ENCODE measurements at regions of chr7 and their contacts with region 1.

Region 1: GRCh38 chr7:105759670-105760550 is 116.5 kb downstream of the ATXN7L1 start:
- DNase-seq: no peak
- ATAC-seq: no peak
- H3K4me3 Mint-ChIP-seq: no peak overlapping the region
- H3K27ac Mint-ChIP-seq: no peak overlapping the region
- H3K4me1 Mint-ChIP-seq: peaks cover 1% of the 10 kb centered on the region
- H3K27me3 Mint-ChIP-seq: no peaks in the 10 kb centered on the region
- CTCF ChIP-seq: peak; percentile 67

Region 2: DNA sequence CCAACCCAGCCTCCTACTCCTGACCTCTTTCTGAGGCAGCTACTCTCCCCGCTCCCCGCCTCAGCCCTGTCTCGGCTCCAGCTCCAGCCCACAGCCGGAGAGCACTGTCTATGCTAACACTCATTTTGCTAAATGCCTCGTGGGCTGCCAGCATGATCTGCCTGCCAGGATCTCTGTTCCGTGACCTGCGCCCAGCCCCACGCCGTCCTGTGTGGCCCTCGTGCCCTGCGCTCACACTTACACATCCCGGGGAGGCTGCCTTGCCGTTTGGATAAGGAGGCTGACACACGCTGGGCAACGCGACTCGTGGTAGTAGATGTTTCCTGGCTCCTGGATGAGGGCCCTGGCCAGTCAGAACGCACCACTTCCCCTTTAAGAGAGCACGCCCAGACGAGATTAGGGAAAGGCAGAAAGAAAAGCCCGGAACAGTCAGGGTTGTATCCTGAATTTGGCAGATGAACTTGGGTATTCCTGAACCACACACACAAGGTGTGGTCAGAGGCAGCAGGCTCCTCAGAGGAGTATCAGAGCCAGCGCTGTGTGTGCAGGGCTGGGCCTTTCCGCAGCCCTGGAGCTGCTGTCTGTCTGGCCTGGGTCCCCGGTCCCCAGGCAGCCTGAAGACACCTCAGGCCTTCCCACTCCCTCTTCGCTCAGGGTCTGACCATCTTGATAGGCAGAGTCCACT is 81.0 kb before region 1 on chr7:
- CTCF ChIA-PET with region 1: interaction called, 3 read pairs
- POLR2A ChIA-PET with region 1: no interaction called
- intact Hi-C with region 1: loop called (anchors 5 kb)
- DNase-seq: peak; percentile 42
- ATAC-seq: peak; percentile 62
- H3K4me3 Mint-ChIP-seq: peak overlapping the region; percentile 94
- H3K27ac Mint-ChIP-seq: peak overlapping the region; percentile 89
- H3K4me1 Mint-ChIP-seq: peaks cover 57% of the 10 kb centered on the region
- H3K27me3 Mint-ChIP-seq: no peaks in the 10 kb centered on the region
- CTCF ChIP-seq: no peak

Region 3: DNA sequence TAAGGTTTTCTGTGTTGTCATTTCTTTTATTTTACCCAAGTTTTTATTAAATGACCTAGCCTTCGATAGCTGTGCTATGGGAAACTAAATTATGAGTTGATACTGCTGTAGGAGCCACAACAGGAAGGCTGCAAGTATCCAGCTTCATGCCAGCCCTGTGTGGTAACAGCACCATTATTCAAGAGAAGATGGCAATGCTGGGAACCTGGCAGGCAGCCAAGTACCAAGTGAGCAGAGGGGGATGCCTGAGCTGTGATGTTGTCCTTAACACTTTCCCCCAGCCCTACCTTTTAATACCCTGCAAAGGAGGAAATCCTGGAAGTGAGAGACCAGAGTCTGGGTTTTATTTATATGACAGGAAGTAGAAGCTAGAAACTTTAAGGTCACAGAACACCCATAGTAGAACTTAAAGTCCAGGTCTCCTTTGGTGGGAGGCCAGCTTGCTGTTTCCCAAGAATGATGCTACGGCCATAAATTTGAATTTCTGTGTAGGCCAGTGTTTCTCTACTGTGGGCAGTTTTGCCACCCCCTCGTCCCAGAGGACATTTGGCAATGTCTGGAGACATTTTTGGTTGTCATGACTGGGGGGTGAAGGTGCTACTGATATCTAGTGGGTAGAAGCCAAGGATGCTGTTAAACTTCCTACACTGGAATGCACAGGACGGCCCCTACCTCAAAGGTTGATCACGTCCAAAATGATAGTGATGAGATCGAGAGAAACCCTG is 125.6 kb after region 1 on chr7:
- CTCF ChIA-PET with region 1: interaction called, 11 read pairs
- POLR2A ChIA-PET with region 1: no interaction called
- intact Hi-C with region 1: no loop called
- DNase-seq: no peak
- ATAC-seq: no peak
- H3K4me3 Mint-ChIP-seq: no peak overlapping the region
- H3K27ac Mint-ChIP-seq: no peak overlapping the region
- H3K4me1 Mint-ChIP-seq: no peaks in the 10 kb centered on the region
- H3K27me3 Mint-ChIP-seq: no peaks in the 10 kb centered on the region
- CTCF ChIP-seq: no peak

Region 4: DNA sequence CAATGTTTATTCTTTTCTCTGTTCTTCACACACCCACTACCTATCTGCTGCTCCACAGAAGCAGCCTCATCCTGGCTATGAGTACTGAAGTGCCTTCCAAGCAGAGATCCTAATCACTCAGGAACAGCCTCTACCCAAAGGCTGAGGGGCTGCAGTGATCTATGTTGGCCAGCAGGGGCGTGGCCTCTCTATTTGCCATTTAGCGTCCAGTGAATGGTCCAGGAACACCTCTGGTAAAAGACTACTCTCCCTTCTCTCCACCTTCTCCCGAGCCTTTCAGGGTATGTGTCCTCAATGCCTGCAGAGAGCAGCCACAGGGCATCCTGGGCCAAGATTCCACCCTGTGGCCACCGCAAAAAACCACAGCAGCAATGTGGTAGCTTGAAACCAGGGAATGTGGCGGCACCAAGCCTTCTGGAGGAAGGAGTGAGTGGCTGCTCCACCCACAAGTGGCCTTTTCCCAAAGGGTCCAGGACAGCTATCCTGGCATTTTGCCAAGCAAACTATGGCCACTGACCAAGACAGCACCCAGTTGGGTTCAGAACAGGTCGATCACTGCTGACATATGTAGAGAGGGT is 281.3 kb after region 1 on chr7:
- CTCF ChIA-PET with region 1: interaction called, 124 read pairs
- POLR2A ChIA-PET with region 1: interaction called, 5 read pairs
- intact Hi-C with region 1: loop called (anchors 1 kb)
- DNase-seq: no peak
- ATAC-seq: peak; percentile 66
- H3K4me3 Mint-ChIP-seq: no peak overlapping the region
- H3K27ac Mint-ChIP-seq: no peak overlapping the region
- H3K4me1 Mint-ChIP-seq: peaks cover 19% of the 10 kb centered on the region
- H3K27me3 Mint-ChIP-seq: no peaks in the 10 kb centered on the region
- CTCF ChIP-seq: peak; percentile 53

Region 5: DNA sequence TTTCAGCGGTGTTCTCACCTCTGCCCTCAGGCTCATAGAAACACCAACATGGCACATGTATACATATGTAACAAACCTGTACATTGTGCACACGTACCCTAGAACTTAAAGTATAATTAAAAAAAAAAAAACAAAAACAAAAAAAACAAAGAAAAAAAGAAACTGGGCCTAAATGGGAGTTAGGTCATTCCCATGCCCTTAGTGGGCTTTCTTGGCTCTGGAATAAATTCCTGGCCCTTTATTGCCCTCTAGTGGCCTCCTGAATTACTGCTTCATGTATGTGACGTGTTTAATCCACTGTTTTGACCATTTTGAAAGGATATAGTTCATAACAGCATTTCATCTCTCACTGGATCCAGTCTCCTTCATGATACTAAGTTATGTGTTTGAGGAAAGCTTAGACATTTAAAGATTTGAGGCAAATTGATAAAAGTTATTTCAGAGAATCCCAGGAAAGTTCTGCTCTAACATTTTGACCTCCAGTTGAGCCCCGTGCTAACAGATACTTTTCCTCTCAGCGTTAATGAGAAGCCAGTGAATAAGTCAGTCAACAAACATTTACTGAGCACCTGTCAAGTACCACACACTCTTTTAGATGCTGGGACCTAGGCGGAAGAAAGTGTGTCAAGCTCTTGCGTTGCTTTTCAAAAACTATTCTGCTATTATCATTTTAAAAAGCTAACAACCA is 406.9 kb after region 1 on chr7:
- CTCF ChIA-PET with region 1: interaction called, 22 read pairs
- POLR2A ChIA-PET with region 1: no interaction called
- intact Hi-C with region 1: loop called (anchors 1 kb)
- DNase-seq: no peak
- ATAC-seq: peak; percentile 54
- H3K4me3 Mint-ChIP-seq: no peak overlapping the region
- H3K27ac Mint-ChIP-seq: no peak overlapping the region
- H3K4me1 Mint-ChIP-seq: peaks cover 10% of the 10 kb centered on the region
- H3K27me3 Mint-ChIP-seq: peaks cover 2% of the 10 kb centered on the region
- CTCF ChIP-seq: peak; percentile 77

Measured in activated B cell treated with CpG ODN at 0.5 μM for 24 hours (primary cell).